IMR-90 (cell line): ENCODE measurements at regions of chr1 and their contacts with region 1.

Region 1: DNA sequence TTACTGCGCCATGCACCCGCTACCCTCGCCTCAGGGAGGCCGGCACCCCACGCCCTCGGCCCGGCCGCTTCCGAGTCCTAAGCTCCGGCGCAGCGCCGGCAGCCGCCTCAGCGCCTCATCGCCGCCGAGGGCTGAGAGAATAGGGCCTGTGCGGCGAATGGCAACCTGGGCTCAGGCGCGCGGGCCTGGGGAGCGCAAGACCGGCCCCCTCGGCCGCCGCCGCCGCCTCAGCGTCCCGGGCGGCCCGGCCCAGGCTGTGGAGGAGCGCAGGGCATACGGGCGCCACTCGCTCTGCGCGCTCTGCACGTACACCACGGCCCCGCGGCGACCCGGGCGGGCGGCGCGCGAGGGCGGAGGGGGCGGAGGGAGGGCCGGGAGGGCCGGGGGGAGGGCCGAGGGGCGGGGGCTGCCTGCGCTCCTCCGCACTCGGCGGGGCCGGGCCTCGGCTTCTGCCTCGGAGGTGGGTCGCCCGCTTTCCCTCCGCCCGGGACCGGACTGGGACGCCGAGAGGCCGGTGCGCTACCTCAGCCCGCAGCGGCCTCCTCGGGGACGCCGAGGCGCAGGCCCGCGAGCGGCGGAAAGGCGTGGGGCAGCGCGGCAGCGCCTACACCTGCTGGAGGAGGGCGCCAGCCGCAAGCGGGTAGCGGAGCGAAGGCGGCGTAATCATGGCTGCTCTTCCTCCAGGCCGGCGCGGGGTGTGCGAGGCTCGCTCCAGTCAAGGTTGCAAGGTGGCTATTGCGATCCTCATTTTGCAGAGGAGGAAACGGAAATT is at the start of gene EGLN1:
- DNase-seq: peak; percentile 88
- ATAC-seq: peak; percentile 85
- H3K4me3 ChIP-seq: peak within 1 kb of the TSS; percentile 78
- H3K27ac ChIP-seq: peak within 1 kb of the TSS; percentile 98
- H3K4me1 ChIP-seq: peaks cover 7% of the 10 kb centered on the region
- H3K27me3 ChIP-seq: no peaks in the 10 kb centered on the region
- CTCF ChIP-seq: peak; percentile 38
- POLR2A ChIP-seq: peak; percentile 81
- RAD21 ChIP-seq: peak; percentile 51
- total RNA-seq, gene EGLN1: 26.9 and 66.4 TPM in 2 replicates

Region 2: DNA sequence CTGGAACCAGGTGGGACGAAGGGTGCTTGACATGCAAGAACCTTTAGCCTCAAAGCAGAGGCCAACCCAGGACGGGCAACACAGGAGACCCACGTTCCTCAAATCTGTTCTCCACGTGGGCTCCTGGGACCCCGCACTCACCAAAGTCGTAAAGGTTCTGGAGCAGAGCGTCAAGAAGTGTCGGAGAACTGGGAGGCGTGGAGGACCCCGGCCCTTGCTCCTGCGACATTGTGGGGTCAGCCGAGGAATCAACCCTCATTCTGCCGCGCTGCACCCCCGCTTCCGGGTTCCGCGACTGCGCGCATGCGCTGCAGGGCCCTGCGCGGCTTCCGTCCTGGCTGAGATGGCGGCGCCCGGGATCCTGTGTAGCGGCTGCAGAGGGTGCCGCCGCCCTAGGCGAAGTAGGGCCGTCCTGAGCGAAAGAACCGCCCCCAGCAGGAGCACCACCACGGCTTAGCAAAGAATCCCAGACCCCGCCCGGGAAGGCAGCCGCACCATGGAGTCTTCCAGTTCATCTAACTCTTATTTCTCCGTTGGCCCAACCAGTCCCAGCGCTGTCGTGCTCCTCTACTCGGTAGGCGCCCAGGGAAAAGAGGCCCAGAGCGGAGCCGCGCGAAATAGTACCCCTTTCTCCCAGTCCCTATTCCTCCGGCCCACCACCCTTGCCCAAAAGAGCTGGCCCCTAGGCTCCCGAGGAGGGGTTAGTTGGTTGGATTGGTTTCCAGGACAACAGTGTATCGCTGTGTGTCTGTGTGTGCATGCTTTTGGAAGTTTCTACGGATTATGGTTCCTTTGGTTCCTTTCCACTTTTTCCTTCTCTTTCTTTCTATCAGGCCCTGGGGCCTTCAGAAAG is 181.1 kb before region 1 on chr1 and contains the start of gene GNPAT:
- CTCF ChIA-PET with region 1: no interaction called
- POLR2A ChIA-PET with region 1: no interaction called
- dilution Hi-C with region 1: no loop called
- in situ Hi-C with region 1: no loop called
- intact Hi-C with region 1: loop called (anchors 5 kb)
- DNase-seq: peak; percentile 78
- ATAC-seq: peak; percentile 98
- H3K4me3 ChIP-seq: peak within 1 kb of the TSS; percentile 71
- H3K27ac ChIP-seq: peak within 1 kb of the TSS; percentile 84
- H3K4me1 ChIP-seq: no peaks in the 10 kb centered on the region
- H3K27me3 ChIP-seq: no peaks in the 10 kb centered on the region
- CTCF ChIP-seq: no peak
- POLR2A ChIP-seq: peak; percentile 78; the same call in 1 of the 2 replicates
- RAD21 ChIP-seq: no peak
- total RNA-seq, gene GNPAT: 36.0 and 43.9 TPM in 2 replicates

Region 3: DNA sequence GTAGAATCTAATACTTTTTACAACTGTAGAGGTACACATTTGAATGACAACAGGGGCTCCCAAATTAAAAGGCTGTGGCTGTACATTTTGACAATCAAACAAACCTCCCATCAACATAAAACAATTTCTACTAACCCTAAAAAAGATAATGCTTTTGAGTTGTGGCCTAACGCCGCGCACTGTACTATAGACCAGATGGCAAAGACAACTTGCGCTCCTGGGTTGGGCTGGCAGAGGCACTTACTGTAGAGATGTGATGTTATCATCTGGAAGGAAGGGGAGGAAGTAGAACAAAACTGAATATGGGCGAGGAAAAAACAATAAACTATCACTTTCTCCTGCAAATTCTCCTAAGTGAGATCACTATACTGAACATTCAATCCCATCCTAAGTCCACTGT is 58.0 kb before region 1 on chr1:
- CTCF ChIA-PET with region 1: no interaction called
- POLR2A ChIA-PET with region 1: no interaction called
- dilution Hi-C with region 1: no loop called
- in situ Hi-C with region 1: loop called (anchors 5 kb)
- intact Hi-C with region 1: loop called (anchors 2 kb)
- DNase-seq: no peak
- ATAC-seq: no peak
- H3K4me3 ChIP-seq: no peak overlapping the region
- H3K27ac ChIP-seq: no peak overlapping the region
- H3K4me1 ChIP-seq: no peaks in the 10 kb centered on the region
- H3K27me3 ChIP-seq: no peaks in the 10 kb centered on the region
- CTCF ChIP-seq: no peak
- POLR2A ChIP-seq: no peak
- RAD21 ChIP-seq: no peak

Region 4: GRCh38 chr1:231395076-231395995 is 26.8 kb before region 1 on chr1:
- CTCF ChIA-PET with region 1: no interaction called
- POLR2A ChIA-PET with region 1: interaction called, 4 read pairs
- dilution Hi-C with region 1: no loop called
- in situ Hi-C with region 1: no loop called
- intact Hi-C with region 1: loop called (anchors 2 kb)
- DNase-seq: peak; percentile 98
- ATAC-seq: peak; percentile 83
- H3K4me3 ChIP-seq: peak overlapping the region; percentile 5; the same call in 1 of the 2 replicates
- H3K27ac ChIP-seq: peak overlapping the region; percentile 42
- H3K4me1 ChIP-seq: peaks cover 7% of the 10 kb centered on the region
- H3K27me3 ChIP-seq: no peaks in the 10 kb centered on the region
- CTCF ChIP-seq: no peak
- POLR2A ChIP-seq: peak; percentile 58; the same call in 1 of the 2 replicates
- RAD21 ChIP-seq: no peak

Region 5: GRCh38 chr1:231432996-231433395 is 10.8 kb after region 1 on chr1:
- CTCF ChIA-PET with region 1: no interaction called
- POLR2A ChIA-PET with region 1: no interaction called
- dilution Hi-C with region 1: no loop called
- in situ Hi-C with region 1: no loop called
- intact Hi-C with region 1: no loop called
- DNase-seq: no peak
- ATAC-seq: no peak
- H3K4me3 ChIP-seq: no peak overlapping the region
- H3K27ac ChIP-seq: no peak overlapping the region
- H3K4me1 ChIP-seq: no peaks in the 10 kb centered on the region
- H3K27me3 ChIP-seq: no peaks in the 10 kb centered on the region
- CTCF ChIP-seq: no peak
- POLR2A ChIP-seq: no peak
- RAD21 ChIP-seq: no peak

Region 6: DNA sequence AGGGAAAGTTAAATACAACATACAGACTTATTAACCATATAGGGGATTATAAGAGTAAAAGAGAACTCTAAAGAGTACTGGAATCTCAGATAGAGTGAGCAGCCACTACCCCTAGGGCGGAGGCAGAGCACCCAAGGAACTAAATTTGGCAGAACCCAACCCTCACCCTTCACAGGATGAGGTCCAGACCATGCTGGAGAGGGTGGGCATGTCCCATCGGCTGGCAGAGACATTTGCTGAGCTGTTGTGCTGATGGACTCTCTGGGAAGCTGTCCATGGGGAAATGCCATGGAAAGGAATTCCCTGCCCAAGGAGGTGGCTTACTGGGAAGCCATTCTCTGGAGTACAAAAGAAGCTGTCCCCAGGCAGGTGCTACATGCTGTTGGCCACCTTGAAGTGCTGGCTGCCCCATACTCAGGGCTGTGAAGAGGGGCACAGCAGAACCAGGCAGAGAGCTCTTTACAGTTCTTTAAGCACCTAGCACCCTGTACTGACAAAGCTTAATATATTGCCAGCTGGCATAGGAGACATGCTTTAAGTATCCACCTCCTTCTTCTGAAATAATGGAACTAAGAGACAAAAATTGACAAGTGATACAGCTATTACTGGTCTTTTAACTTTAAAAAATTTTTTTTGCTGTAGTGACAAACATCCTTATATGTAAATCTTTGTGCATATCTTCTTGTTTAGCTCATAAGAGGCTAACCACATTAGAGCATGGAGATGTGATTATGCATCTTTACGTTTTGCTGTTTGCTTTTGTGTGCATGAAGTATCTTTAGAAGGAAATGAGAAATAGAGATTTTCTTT is 135.9 kb after region 1 on chr1:
- CTCF ChIA-PET with region 1: no interaction called
- POLR2A ChIA-PET with region 1: no interaction called
- dilution Hi-C with region 1: no loop called
- in situ Hi-C with region 1: no loop called
- intact Hi-C with region 1: loop called (anchors 1 kb)
- DNase-seq: peak; percentile 77
- ATAC-seq: peak; percentile 87
- H3K4me3 ChIP-seq: no peak overlapping the region
- H3K27ac ChIP-seq: peak overlapping the region; percentile 34; the same call in 1 of the 2 replicates
- H3K4me1 ChIP-seq: peaks cover 7% of the 10 kb centered on the region
- H3K27me3 ChIP-seq: no peaks in the 10 kb centered on the region
- CTCF ChIP-seq: no peak
- POLR2A ChIP-seq: no peak
- RAD21 ChIP-seq: no peak

Region 7: GRCh38 chr1:231603598-231604275 is 181.6 kb after region 1 on chr1:
- CTCF ChIA-PET with region 1: no interaction called
- POLR2A ChIA-PET with region 1: no interaction called
- dilution Hi-C with region 1: no loop called
- in situ Hi-C with region 1: no loop called
- intact Hi-C with region 1: loop called (anchors 5 kb)
- DNase-seq: peak; percentile 54
- ATAC-seq: peak; percentile 70
- H3K4me3 ChIP-seq: peak overlapping the region; percentile 76
- H3K27ac ChIP-seq: no peak overlapping the region
- H3K4me1 ChIP-seq: peaks cover 4% of the 10 kb centered on the region; the same call in 1 of the 2 replicates
- H3K27me3 ChIP-seq: no peaks in the 10 kb centered on the region
- CTCF ChIP-seq: peak; percentile 86
- POLR2A ChIP-seq: no peak
- RAD21 ChIP-seq: peak; percentile 76

Region 8: GRCh38 chr1:231757101-231757404 is 334.9 kb after region 1 on chr1:
- CTCF ChIA-PET with region 1: no interaction called
- POLR2A ChIA-PET with region 1: no interaction called
- dilution Hi-C with region 1: no loop called
- in situ Hi-C with region 1: no loop called
- intact Hi-C with region 1: no loop called
- DNase-seq: no peak
- ATAC-seq: peak; percentile 53
- H3K4me3 ChIP-seq: no peak overlapping the region
- H3K27ac ChIP-seq: no peak overlapping the region
- H3K4me1 ChIP-seq: no peaks in the 10 kb centered on the region
- H3K27me3 ChIP-seq: no peaks in the 10 kb centered on the region
- CTCF ChIP-seq: no peak
- POLR2A ChIP-seq: no peak
- RAD21 ChIP-seq: no peak